PC-3 (cell line): ENCODE measurements at regions of chr2 and their contacts with region 1.

Region 1: DNA sequence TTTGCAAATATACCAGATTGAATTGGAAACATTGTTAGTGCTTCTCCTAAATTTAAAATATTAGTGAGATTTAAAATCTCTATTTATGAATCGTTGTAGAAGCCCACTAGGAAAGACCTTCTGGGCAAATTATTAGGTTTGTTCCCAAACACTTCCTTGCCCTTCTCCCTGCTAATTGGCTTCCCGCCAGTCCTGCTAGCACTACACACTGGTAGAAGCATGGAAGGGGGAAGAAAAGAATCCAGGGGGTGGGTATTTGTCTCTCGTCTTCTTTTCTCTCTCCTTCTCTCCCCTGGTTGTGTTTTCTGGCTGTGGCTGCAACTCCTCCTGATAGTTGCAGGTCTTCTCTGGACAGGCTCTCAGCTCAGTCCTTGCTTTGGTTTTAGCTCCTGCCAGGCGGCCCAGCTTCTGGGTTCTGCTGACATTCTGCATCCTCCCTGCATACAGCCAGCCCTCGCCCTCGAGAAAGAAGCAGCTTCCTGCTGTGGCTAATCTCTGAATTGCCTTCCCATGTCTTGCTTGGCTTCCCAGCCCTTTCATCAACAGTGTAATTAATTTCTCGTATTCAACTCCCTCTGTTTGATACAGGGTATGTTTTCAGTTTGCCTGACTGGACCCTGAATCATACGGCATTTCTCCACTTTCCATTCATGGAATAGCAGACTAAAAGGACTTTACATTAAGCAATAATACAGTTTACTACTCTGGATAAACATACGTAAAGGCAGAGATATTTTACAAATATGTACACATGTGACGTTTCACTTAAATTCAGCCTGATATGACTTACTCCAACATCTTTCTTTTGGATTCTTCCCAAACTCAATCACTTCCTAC is 6.9 kb upstream of the PARD3B start:
- DNase-seq: peak; percentile 19
- ATAC-seq: no peak
- H3K4me3 ChIP-seq: no peak overlapping the region
- H3K27ac ChIP-seq: no peak overlapping the region
- H3K4me1 ChIP-seq: peaks cover 22% of the 10 kb centered on the region
- H3K27me3 ChIP-seq: no peaks in the 10 kb centered on the region
- CTCF ChIP-seq: no peak

Region 2: DNA sequence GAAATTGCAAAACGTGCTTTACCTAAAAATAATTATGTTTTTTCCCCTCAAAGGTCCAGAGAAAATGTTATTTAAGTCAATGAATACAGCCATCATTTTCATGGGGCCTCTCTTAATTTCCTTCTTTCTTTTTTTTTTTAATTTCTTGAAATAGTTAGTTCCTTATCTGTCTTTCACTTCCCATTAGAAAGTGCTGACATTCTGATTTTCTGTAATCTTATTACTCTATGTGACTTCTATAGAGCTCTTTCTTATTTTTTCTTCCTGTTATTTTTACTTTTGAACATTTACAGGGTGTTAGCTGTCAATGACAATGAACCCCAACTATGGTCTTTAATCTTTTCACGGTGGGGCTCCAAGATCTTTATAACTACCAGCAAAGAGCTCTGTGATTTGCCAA is 640.9 kb before region 1 on chr2:
- CTCF ChIA-PET with region 1: no interaction called
- POLR2A ChIA-PET with region 1: no interaction called
- intact Hi-C with region 1: no loop called
- DNase-seq: no peak
- ATAC-seq: no peak
- H3K4me3 ChIP-seq: no peak overlapping the region
- H3K27ac ChIP-seq: no peak overlapping the region
- H3K4me1 ChIP-seq: peaks cover 5% of the 10 kb centered on the region; the same call in 1 of the 2 replicates
- H3K27me3 ChIP-seq: peaks cover 5% of the 10 kb centered on the region; the same call in 1 of the 2 replicates
- CTCF ChIP-seq: no peak

Region 3: GRCh38 chr2:204339212-204339715 is 199.1 kb before region 1 on chr2:
- CTCF ChIA-PET with region 1: no interaction called
- POLR2A ChIA-PET with region 1: no interaction called
- intact Hi-C with region 1: loop called (anchors 1 kb)
- DNase-seq: peak; percentile 62
- ATAC-seq: peak; percentile 76
- H3K4me3 ChIP-seq: peak overlapping the region; percentile 57
- H3K27ac ChIP-seq: peak overlapping the region; percentile 69
- H3K4me1 ChIP-seq: peaks cover 23% of the 10 kb centered on the region
- H3K27me3 ChIP-seq: no peaks in the 10 kb centered on the region
- CTCF ChIP-seq: no peak

Region 4: GRCh38 chr2:204452464-204453023 is 85.9 kb before region 1 on chr2:
- CTCF ChIA-PET with region 1: no interaction called
- POLR2A ChIA-PET with region 1: no interaction called
- intact Hi-C with region 1: loop called (anchors 1 kb)
- DNase-seq: peak; percentile 96
- ATAC-seq: peak; percentile 97
- H3K4me3 ChIP-seq: peak overlapping the region; percentile 5; the same call in 1 of the 2 replicates
- H3K27ac ChIP-seq: peak overlapping the region; percentile 81
- H3K4me1 ChIP-seq: peaks cover 22% of the 10 kb centered on the region
- H3K27me3 ChIP-seq: no peaks in the 10 kb centered on the region
- CTCF ChIP-seq: no peak

Region 5: DNA sequence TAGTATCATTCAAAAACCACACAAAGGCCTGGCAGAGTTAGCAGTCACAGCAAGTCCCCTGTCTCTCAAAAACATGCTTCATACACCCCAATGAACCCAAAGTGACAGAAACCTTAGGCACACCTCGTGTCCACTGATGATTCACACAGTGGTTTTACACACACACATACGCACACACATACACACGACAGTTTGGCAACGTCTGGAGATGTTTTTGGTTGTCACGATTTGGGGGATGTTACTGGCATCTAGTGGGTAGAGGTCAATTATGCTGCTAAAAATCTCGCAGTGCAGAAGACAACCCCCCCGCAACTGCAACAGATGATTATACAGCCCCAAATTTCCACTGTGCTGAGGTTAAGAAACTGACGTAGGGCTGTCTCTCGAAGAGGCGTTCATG is 66.0 kb before region 1 on chr2:
- CTCF ChIA-PET with region 1: no interaction called
- POLR2A ChIA-PET with region 1: no interaction called
- intact Hi-C with region 1: loop called (anchors 1 kb)
- DNase-seq: no peak
- ATAC-seq: no peak
- H3K4me3 ChIP-seq: no peak overlapping the region
- H3K27ac ChIP-seq: no peak overlapping the region
- H3K4me1 ChIP-seq: peaks cover 16% of the 10 kb centered on the region
- H3K27me3 ChIP-seq: no peaks in the 10 kb centered on the region
- CTCF ChIP-seq: no peak

Region 6: DNA sequence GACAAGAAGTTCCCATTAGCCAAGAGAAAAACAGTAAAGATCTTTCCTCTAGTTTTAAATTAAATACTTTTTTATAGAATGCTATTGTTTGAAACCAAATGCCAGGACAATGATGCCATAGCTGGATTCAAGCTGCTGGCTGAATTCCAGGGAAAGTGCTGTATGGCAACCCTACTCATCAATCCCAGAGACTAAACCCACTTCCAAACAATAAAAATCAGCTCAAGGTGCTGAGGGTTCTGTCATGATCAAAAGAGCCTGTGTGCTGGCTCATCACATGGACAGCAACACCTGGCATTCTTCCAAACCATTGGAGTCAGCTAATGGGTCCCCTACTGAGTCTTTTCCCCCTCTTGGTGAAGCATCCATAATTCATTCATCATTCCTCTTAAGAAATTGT is 46.9 kb before region 1 on chr2:
- CTCF ChIA-PET with region 1: no interaction called
- POLR2A ChIA-PET with region 1: no interaction called
- intact Hi-C with region 1: no loop called
- DNase-seq: peak; percentile 77
- ATAC-seq: peak; percentile 50
- H3K4me3 ChIP-seq: no peak overlapping the region
- H3K27ac ChIP-seq: no peak overlapping the region
- H3K4me1 ChIP-seq: no peaks in the 10 kb centered on the region; the same call in 1 of the 2 replicates
- H3K27me3 ChIP-seq: no peaks in the 10 kb centered on the region
- CTCF ChIP-seq: no peak

Region 7: DNA sequence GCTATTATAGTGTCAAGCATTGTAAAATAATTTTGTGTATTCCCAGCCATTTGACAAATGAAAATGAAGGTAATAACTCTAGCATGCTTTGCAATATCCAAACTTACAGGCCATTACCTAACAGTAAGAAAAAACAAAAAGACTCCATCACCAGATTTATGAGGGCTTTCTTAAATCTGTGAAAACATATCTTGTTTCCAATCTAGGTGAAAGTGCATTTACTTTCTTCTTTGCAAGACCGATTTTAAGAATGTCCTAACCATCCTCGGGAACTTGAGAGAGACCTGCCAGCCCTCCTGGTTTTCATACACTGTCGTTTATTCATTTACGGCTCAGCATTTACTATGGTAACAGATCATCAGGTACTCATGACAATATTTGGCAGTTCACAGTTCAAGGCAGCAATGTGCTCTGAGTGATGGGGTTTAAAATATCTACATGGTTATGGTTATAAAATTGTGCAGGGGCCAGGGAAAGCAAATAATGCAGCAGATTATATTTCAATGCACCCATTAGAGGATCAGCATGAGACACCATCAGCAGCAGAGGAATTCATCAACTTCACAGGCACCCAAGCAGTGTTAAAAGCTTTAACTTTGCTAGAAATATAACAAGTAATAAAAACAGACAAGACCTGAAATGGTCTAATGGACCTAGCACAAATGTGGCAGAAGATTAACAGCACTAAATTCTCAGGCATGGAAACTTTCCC is 27.5 kb before region 1 on chr2:
- CTCF ChIA-PET with region 1: no interaction called
- POLR2A ChIA-PET with region 1: no interaction called
- intact Hi-C with region 1: loop called (anchors 1 kb)
- DNase-seq: no peak
- ATAC-seq: no peak
- H3K4me3 ChIP-seq: no peak overlapping the region
- H3K27ac ChIP-seq: no peak overlapping the region
- H3K4me1 ChIP-seq: no peaks in the 10 kb centered on the region
- H3K27me3 ChIP-seq: no peaks in the 10 kb centered on the region
- CTCF ChIP-seq: no peak

Region 8: DNA sequence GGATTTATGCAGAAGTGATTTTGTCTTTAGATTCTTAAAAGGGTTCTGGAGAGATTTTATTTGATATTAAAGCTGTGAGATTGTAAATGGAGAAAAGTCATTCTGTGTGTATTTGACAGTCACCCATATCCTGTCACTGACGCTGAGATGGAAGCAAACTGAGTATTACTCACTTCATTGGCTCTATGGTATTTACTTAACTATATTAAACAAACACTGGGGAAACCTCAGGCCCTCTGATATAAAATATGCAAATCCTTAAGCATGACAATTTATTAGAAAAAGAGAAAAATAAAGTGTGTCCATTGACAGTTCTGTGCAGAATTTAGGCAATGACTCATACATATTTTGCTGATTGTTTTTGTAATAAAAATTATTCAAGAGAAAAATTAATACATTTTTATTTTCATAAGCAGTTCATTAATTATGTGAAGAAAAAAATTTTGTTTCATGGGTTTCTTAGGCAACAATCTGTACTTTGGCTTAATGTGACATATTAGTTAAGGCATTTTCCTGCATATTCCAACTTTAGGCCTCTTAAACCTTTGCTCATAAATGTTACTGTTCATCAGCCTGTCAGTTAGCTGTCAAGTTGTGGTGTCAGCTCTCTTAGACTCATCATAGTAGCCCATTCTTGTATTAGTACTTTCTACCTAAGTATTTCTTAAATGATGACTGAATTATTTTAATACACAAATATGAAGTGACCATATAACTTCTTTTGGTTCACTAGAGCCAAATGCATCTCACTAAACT is 106.8 kb after region 1 on chr2:
- CTCF ChIA-PET with region 1: no interaction called
- POLR2A ChIA-PET with region 1: no interaction called
- intact Hi-C with region 1: loop called (anchors 1 kb)
- DNase-seq: peak; percentile 85
- ATAC-seq: peak; percentile 98
- H3K4me3 ChIP-seq: no peak overlapping the region
- H3K27ac ChIP-seq: peak overlapping the region; percentile 71
- H3K4me1 ChIP-seq: peaks cover 28% of the 10 kb centered on the region
- H3K27me3 ChIP-seq: no peaks in the 10 kb centered on the region
- CTCF ChIP-seq: no peak

Region 9: DNA sequence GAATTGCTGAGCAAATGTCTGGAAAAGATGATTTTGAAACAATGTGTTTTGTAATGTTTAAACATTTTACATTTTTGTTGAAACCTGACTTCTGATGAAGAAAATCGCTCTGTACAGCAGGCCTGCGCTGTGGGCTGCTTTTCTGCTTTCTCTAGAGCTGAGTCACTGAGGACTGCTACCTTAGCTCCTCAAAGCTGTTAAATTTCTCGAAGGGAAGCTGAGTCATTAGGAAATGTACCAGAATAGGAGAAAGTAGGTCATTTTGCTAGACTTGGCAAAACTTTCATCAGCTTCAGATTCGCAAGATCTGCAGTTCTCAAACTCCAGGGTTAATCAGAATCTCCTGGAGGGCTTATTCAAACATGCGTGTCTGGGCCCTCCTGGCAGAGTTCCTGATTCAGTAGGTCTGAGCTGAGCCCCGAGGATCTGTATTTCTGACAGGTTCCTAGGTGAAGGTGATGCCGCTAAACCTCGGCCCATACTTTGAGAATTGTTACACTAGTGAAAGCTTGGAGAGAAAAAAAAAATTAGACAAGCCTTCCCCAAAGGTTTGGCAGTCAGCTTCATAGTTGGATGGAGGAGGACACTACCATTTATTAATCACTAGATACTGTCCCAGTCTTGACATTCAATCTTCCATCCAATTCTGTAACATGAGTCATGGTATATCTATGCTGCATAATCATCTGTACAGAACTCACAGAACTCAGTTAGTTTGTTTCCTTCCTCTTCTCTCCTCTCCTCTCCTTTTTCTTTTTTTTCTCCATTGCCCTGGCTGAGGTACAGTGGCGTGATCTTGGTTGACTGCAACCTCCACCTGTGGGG is 304.5 kb after region 1 on chr2:
- CTCF ChIA-PET with region 1: no interaction called
- POLR2A ChIA-PET with region 1: no interaction called
- intact Hi-C with region 1: loop called (anchors 10 kb)
- DNase-seq: peak; percentile 84
- ATAC-seq: peak; percentile 93
- H3K4me3 ChIP-seq: peak overlapping the region; percentile 25; the same call in 1 of the 2 replicates
- H3K27ac ChIP-seq: peak overlapping the region; percentile 57
- H3K4me1 ChIP-seq: peaks cover 28% of the 10 kb centered on the region
- H3K27me3 ChIP-seq: no peaks in the 10 kb centered on the region
- CTCF ChIP-seq: no peak